ENCODE measurements at regions of chr2 and their contacts with region 1.

Region 1: GRCh38 chr2:230160112-230160660 is 59.6 kb downstream of the SP110 start:
- DNase-seq: peak in 4 of 5 donors; percentile 20 to 37 (median 28)
- H3K4me3 ChIP-seq: no peak overlapping the region
- H3K4me3 Mint-ChIP-seq: no peak overlapping the region
- H3K27ac ChIP-seq: no peak overlapping the region
- H3K27ac Mint-ChIP-seq: peak overlapping the region in 1 of 8 donors; percentile 91
- H3K4me1 ChIP-seq: no peaks in the 10 kb centered on the region
- H3K4me1 Mint-ChIP-seq: peaks cover 0 to 5% (median 3%) of the 10 kb centered on the region in 3 donors
- H3K27me3 ChIP-seq: no peaks in the 10 kb centered on the region
- H3K27me3 Mint-ChIP-seq: no peaks in the 10 kb centered on the region

Region 2: DNA sequence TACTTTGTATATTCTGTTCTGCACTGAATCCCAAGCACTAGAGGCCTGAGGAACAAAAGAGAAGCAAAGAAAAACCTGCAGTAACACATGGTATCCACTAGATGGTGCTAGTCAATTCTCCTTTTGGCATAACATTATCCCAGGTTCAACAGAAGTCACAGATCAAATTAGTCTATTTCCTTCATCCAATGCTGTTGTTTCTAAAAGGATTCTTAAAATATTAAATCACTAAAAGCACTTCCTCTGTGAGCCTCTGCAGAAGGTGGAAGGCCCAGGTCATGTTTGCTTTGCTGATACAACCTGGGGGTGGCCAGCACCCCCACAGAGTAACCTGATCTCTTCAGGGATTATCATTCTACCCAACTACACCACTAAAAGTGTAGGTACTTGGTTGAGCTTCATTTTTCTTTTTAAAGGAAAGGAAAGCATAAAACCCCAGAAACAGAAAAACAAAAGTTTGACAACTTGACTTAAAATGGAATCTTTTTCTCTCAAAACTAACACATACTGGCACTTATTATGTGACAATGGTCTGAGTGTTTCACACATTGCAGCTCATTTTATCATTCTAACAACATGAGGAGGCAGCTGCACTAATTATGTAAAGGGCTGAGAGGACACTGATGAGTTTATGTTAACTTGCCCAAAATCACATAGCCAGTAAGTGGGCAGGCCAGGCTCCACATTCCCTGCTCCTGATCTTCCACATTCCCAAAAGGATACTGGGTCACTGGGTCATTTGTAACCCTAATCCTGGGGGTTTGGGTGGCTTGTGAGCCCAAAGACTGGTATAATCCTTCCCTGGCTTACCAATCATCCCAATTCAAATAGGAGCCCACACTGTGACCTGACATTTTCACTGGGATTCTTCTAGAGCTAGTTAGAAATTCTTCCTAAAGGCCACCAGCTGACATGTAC is 379.1 kb before region 1 on chr2:
- CTCF ChIA-PET with region 1: interaction called, 13 read pairs
- POLR2A ChIA-PET with region 1: no interaction called
- DNase-seq: peak in 2 of 5 donors; percentile 20 to 27
- H3K4me3 ChIP-seq: no peak overlapping the region
- H3K4me3 Mint-ChIP-seq: peak overlapping the region in 1 of 7 donors; percentile 36
- H3K27ac ChIP-seq: no peak overlapping the region
- H3K27ac Mint-ChIP-seq: peak overlapping the region in 6 of 8 donors; percentile 7 to 71 (median 28)
- H3K4me1 ChIP-seq: peaks cover 4% of the 10 kb centered on the region
- H3K4me1 Mint-ChIP-seq: peaks cover 29 to 52% (median 46%) of the 10 kb centered on the region in 3 donors
- H3K27me3 ChIP-seq: no peaks in the 10 kb centered on the region
- H3K27me3 Mint-ChIP-seq: no peaks in the 10 kb centered on the region